CD8-positive, alpha-beta T cell (primary cell): ENCODE measurements at regions of chr19 and their contacts with region 1.

Region 1: DNA sequence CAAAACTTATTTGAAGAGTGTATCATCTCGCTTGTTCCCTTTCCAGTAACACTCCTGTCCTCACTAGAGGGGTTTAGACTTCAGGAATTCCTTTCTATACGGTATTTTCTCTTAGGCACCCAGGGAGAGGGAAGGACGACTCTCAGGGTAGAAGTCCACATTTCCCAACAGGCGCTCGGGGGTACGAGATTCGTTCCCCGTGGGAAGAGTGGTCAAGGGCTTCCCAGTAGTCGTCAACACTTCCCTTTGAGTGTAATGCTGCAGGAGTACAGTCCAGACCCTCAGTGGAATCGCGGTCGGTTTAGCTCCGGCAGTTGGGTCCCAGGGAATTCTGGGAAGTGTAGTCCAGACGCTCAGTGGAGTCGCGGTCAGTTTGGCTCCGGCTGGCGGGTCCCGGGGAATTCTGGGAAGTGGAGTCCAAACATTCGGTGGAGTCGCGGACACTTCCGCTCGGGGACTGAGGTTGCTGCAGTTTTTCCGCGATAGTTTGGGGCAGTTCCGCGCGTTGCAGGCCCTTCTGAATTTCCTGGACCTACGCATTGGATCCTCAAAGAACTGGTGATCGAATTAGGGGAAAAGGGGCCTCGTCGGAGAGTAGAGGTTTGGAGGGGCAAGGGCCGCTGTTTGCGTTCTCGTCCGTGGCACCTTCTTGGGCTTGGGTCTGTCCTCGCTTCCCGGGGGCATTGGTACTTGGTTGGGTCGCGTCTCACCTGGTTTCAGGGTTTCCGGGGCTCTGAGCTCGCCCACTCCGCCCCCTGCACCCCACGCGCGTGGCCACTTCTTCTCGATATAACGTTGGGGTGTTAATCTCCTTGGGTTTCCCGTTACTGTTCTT is at the start of gene ZNF224:
- DNase-seq: peak; percentile 55 to 91 (median 83)
- ATAC-seq: peak; percentile 78
- H3K4me3 ChIP-seq: peak within 1 kb of the TSS; percentile 76 to 89
- H3K4me3 Mint-ChIP-seq: peak within 1 kb of the TSS; percentile 96
- H3K27ac ChIP-seq: peak within 1 kb of the TSS; percentile 63 to 74
- H3K27ac Mint-ChIP-seq: peak within 1 kb of the TSS; percentile 91
- H3K4me1 ChIP-seq: no peaks in the 10 kb centered on the region
- H3K4me1 Mint-ChIP-seq: peaks cover 28% of the 10 kb centered on the region
- H3K27me3 ChIP-seq: no peaks in the 10 kb centered on the region
- H3K27me3 Mint-ChIP-seq: no peaks in the 10 kb centered on the region
- CTCF ChIP-seq: no peak
- total RNA-seq, gene ZNF224: 18.2 to 22.5 TPM

Region 2: DNA sequence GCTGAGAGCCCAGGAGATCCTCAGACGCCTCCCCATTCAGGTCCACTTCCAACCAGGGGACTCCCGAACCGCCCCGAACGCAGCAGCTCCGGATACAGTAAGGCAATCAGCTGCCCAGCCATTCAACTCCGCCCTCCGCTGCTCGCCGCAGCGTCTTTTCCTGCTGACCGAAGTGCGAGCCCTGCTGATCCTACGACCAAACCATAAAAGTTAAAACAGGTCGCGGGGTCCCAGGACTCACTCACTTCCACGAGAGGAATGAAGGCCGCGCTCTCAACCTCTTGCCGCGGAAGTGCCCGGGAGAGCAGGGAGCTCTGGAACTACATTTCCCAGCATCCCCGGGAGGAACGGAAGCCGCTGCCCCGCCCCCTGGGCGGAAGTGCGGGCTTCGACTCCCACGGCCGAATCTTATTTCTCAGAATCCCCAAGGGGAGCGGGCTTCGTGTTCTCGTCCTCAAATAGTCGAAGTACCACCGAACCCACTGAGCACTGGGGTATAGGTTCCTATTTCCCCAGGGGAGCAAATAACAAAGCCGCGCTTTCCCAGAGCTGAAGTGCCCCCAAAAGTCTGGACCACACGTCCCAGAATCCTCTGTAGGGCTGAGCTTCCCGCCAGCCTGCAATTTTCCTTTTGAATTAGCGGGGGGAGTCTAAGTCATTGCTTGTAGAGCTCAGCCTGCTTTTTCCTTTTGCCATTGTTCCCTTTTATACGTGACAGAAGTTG is 159.0 kb before region 1 on chr19 and contains the start of gene ZNF45:
- CTCF ChIA-PET with region 1: no interaction called
- POLR2A ChIA-PET with region 1: no interaction called
- intact Hi-C with region 1: loop called (anchors 1 to 2 kb)
- DNase-seq: peak; percentile 68 to 94 (median 88)
- ATAC-seq: peak; percentile 94
- H3K4me3 ChIP-seq: peak within 1 kb of the TSS; percentile 90 to 96
- H3K4me3 Mint-ChIP-seq: peak within 1 kb of the TSS; percentile 96
- H3K27ac ChIP-seq: peak within 1 kb of the TSS; percentile 59 to 85
- H3K27ac Mint-ChIP-seq: peak within 1 kb of the TSS; percentile 90
- H3K4me1 ChIP-seq: peaks cover 13% of the 10 kb centered on the region
- H3K4me1 Mint-ChIP-seq: peaks cover 27% of the 10 kb centered on the region
- H3K27me3 ChIP-seq: no peaks in the 10 kb centered on the region
- H3K27me3 Mint-ChIP-seq: peaks cover 2% of the 10 kb centered on the region
- CTCF ChIP-seq: no peak
- total RNA-seq, gene ZNF45: 6.2 to 7.8 TPM

Region 3: GRCh38 chr19:44025217-44025936 is 68.8 kb before region 1 on chr19 and contains the start of gene ZNF222:
- CTCF ChIA-PET with region 1: no interaction called
- POLR2A ChIA-PET with region 1: no interaction called
- intact Hi-C with region 1: loop called (anchors 1 kb)
- DNase-seq: peak; percentile 34 to 89 (median 75)
- ATAC-seq: peak; percentile 97
- H3K4me3 ChIP-seq: peak within 1 kb of the TSS; percentile 84 to 92
- H3K4me3 Mint-ChIP-seq: peak within 1 kb of the TSS; percentile 95
- H3K27ac ChIP-seq: peak within 1 kb of the TSS; percentile 47 to 61
- H3K27ac Mint-ChIP-seq: peak within 1 kb of the TSS; percentile 91
- H3K4me1 ChIP-seq: peaks cover 12% of the 10 kb centered on the region
- H3K4me1 Mint-ChIP-seq: peaks cover 30% of the 10 kb centered on the region
- H3K27me3 ChIP-seq: no peaks in the 10 kb centered on the region
- H3K27me3 Mint-ChIP-seq: peaks cover 1% of the 10 kb centered on the region
- CTCF ChIP-seq: no peak
- total RNA-seq, gene ZNF222: 7.7 TPM

Region 4: DNA sequence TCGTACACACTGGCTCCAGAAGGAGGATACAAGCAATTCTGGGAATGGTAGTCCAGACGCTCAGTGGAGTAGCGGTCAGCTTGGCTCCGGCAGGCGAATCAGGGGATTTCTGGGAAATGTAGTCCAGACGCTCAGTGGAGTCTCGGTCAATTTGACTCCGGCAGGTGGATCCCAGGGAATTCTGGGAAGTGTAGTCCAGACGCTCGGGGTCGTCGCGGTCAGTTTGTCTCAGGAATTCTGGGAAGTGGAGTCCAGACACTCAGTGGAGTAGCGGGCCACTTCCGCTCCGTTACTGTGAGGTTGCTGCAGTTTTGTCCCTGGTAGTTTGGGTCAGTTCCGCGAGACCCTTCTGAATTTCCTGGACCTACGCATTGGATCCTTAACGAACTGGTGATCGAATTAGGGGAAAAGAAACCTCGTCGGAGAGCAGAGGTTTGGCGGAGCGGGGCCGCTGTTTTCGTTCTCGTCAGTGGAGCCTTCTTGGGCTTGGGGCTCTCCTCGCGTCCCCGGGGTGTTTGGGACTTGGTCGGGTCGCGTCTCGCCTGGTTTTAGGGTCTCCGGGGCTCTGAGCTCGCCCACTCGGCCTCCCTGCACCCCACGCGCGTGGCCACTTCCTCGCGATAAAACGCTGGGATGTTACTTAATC is 19.1 kb after region 1 on chr19 and contains the start of gene ZNF225:
- CTCF ChIA-PET with region 1: interaction called, 3 read pairs
- POLR2A ChIA-PET with region 1: interaction called, 3 read pairs
- intact Hi-C with region 1: loop called (anchors 1 kb)
- DNase-seq: peak; percentile 64 to 95 (median 83)
- ATAC-seq: peak; percentile 97
- H3K4me3 ChIP-seq: peak within 1 kb of the TSS; percentile 80 to 92
- H3K4me3 Mint-ChIP-seq: peak within 1 kb of the TSS; percentile 99
- H3K27ac ChIP-seq: peak within 1 kb of the TSS; percentile 40 to 64
- H3K27ac Mint-ChIP-seq: peak within 1 kb of the TSS; percentile 93
- H3K4me1 ChIP-seq: peaks cover 14% of the 10 kb centered on the region
- H3K4me1 Mint-ChIP-seq: peaks cover 34% of the 10 kb centered on the region
- H3K27me3 ChIP-seq: no peaks in the 10 kb centered on the region
- H3K27me3 Mint-ChIP-seq: no peaks in the 10 kb centered on the region
- CTCF ChIP-seq: no peak
- total RNA-seq, gene ZNF225: 1.3 to 1.6 TPM

Region 5: GRCh38 chr19:44212250-44212865 is 118.2 kb after region 1 on chr19 and contains the start of gene ZNF227:
- CTCF ChIA-PET with region 1: no interaction called
- POLR2A ChIA-PET with region 1: no interaction called
- intact Hi-C with region 1: loop called (anchors 5 kb)
- DNase-seq: peak; percentile 52 to 88 (median 81)
- ATAC-seq: peak; percentile 96
- H3K4me3 ChIP-seq: peak within 1 kb of the TSS; percentile 79 to 94
- H3K4me3 Mint-ChIP-seq: peak within 1 kb of the TSS; percentile 95
- H3K27ac ChIP-seq: peak within 1 kb of the TSS; percentile 75 to 81
- H3K27ac Mint-ChIP-seq: peak within 1 kb of the TSS; percentile 95
- H3K4me1 ChIP-seq: peaks cover 18% of the 10 kb centered on the region
- H3K4me1 Mint-ChIP-seq: peaks cover 32% of the 10 kb centered on the region
- H3K27me3 ChIP-seq: no peaks in the 10 kb centered on the region
- H3K27me3 Mint-ChIP-seq: no peaks in the 10 kb centered on the region
- CTCF ChIP-seq: no peak
- total RNA-seq, gene ZNF227: 22.6 to 23.0 TPM

Region 6: DNA sequence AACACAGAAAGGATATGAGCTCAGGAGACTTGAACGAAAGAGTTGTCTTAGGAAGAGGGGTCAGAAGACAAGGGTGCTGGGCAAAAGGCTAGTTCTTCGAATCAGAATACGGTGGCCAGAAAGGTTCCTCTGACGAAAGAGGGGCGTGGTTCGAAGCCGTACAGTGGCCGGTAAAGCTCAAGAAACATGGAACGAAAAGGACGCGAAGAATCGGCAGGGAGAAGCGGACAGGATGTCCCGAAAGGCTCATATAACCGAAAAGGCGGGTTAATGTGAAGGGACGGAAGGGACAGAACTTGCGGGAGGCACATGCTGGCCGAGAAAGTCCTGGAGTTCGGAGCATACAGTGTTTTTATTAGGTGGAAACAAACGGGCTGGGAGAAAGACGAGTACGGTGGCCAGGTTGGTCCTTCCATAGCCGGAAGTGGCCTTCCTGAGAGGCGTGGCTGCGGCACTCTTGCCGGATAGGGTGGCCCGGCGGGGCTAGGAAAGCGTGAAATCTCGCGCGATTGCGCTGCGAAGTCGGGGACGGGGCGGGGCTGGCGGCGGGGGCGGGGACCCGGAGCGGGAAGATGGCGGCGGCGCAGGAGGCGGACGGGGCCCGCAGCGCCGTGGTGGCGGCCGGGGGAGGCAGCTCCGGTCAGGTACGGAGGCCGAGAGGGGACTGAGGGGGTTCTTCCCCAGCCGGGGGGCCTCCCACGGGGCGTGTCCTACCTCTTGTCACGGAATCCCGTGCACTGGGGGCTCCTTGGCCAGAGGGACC is 860.9 kb after region 1 on chr19 and contains the start of gene CLPTM1:
- CTCF ChIA-PET with region 1: no interaction called
- POLR2A ChIA-PET with region 1: no interaction called
- intact Hi-C with region 1: loop called in 1 of 2 experiments (anchors 5 kb)
- DNase-seq: peak; percentile 93 to 98 (median 96)
- ATAC-seq: peak; percentile 91
- H3K4me3 ChIP-seq: peak within 1 kb of the TSS; percentile 72 to 88
- H3K4me3 Mint-ChIP-seq: peak within 1 kb of the TSS; percentile 97
- H3K27ac ChIP-seq: peak within 1 kb of the TSS; percentile 76 to 92
- H3K27ac Mint-ChIP-seq: peak within 1 kb of the TSS; percentile 97
- H3K4me1 ChIP-seq: peaks cover 31% of the 10 kb centered on the region
- H3K4me1 Mint-ChIP-seq: peaks cover 56% of the 10 kb centered on the region
- H3K27me3 ChIP-seq: no peaks in the 10 kb centered on the region
- H3K27me3 Mint-ChIP-seq: no peaks in the 10 kb centered on the region
- CTCF ChIP-seq: no peak
- total RNA-seq, gene CLPTM1: 108 to 113 TPM